Sciatic nerve (tissue), 2 donors: ENCODE measurements at regions of chr6 and their contacts with region 1.

Region 1: GRCh38 chr6:144478483-144478882 is 193.3 kb downstream of the UTRN start:
- DNase-seq: no peak
- ATAC-seq: peak; percentile 60

Region 2: DNA sequence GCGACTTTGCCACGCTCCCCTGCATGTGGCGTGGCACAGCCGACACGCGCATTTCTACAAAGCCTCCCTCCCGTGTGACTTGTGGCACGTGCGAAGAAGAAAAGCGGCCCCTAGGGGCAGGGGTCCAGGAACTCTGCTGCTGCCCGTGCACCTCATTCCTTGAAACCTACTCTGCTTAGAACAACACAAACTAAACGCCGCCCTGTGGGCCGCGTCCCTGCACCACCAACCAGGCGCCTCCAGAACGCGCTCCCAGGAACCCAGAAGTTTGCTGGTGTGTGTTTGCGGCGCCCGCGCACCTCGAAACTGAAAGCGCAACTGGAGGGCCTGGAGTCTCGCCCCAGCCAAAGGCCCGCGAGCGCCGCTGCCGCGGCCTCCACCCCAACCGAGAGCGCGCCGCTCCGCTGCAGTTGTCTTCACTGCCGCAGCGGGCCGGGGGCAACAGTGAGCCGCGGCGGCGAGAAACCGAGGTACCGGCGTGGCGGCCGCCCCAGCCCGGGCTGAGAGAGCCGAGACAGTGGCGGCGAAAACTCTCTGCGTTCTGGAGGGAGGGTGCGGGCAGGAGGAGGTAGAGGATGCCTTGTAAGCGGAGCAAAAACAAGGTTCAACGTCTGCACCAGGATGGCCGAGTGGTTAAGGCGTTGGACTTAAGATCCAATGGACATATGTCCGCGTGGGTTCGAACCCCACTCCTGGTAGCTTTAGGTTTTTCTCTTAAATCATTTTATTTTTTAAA is 262.4 kb before region 1 on chr6:
- intact Hi-C with region 1: loop called (anchors 10 kb)
- DNase-seq: peak; percentile 97
- ATAC-seq: peak; percentile 96